ENCODE measurements at regions of chr17 and their contacts with region 1.

Region 1: GRCh38 chr17:2954898-2955445 is 108.4 kb downstream of the OR1D5 start:
- DNase-seq: peak; percentile 88
- H3K4me3 ChIP-seq: no peak overlapping the region
- H3K27ac ChIP-seq: peak overlapping the region; percentile 77
- H3K4me1 ChIP-seq: peaks cover 25% of the 10 kb centered on the region
- H3K27me3 ChIP-seq: no peaks in the 10 kb centered on the region
- CTCF ChIP-seq: no peak
- POLR2A ChIP-seq: no peak

Region 2: DNA sequence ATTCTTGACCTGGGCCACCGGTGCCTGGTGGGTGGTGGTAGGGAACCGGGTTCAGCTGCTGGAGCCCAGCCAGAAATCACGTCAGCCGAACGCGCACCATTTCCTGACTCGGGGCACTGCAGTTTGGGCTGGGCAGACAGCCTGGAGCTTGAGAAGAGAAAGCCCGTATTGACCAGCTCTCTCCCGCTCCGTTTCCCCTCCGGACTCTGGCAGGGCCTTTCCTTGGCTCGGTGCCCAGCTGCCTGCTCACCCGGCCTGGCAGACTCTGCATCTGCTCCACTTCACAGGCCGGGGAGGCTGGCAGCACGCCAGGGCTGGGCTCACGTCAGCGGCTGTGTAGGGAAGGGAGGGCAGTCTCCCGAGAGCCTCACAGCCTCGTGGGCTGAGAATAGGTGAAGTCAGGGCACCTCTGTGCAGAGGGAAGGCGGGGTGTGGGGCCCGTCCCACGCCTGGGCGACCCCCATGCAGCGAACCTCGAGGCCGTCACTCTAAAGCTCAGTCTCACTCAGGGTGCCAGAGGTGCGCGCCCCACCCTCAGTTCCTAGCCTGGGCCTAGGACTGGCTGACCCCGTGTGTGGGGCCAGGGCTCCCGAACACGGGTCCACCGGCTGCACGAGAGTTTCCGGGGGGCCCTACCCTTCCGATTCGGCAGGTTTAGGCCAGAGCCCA is 49.3 kb after region 1 on chr17:
- CTCF ChIA-PET with region 1: interaction called, 4 read pairs
- POLR2A ChIA-PET with region 1: interaction called, 5 read pairs
- dilution Hi-C with region 1: no loop called
- intact Hi-C with region 1: loop called (anchors 1 kb)
- DNase-seq: peak; percentile 99
- H3K4me3 ChIP-seq: no peak overlapping the region
- H3K27ac ChIP-seq: peak overlapping the region; percentile 85
- H3K4me1 ChIP-seq: peaks cover 17% of the 10 kb centered on the region
- H3K27me3 ChIP-seq: no peaks in the 10 kb centered on the region
- CTCF ChIP-seq: no peak
- POLR2A ChIP-seq: peak; percentile 20